ENCODE measurements at regions of chr7 and their contacts with region 1.

Region 1: DNA sequence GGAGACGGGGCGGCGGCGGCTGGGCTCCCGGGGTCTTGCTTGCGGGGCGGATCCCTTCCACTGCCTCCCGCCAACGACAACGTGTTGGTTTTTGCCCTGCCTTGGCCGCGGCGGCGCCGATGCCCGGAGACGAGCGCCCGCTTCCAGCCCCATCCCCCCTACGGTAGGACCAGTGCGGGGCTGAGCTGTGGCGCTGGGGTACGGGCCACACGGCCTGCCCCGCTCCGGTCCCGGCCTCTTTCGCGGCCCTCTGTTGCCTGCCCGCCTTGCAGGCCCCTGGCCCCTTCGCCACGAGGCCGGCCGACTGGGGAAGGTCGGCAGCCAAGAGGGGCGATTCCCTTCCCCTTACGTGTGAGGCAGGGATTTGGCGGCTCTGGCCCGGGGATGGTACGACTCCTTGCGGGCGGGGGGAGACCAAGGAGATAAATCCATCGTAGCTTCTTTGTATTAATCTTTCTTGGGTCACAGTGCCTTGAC is 488 bp downstream of the EIF4H start:
- DNase-seq: peak; percentile 55

Region 2: GRCh38 chr7:73647725-73648592 is 526.7 kb before region 1 on chr7:
- in situ Hi-C with region 1: no loop called
- DNase-seq: peak; percentile 27

Region 3: GRCh38 chr7:74083117-74083876 is 91.3 kb before region 1 on chr7 and contains the start of gene LIMK1:
- in situ Hi-C with region 1: loop called (anchors 25 kb)
- DNase-seq: peak; percentile 78
- total RNA-seq, gene LIMK1: 26.4 and 28.8 TPM in 2 replicates

Region 4: GRCh38 chr7:74312418-74313021 is 137.9 kb after region 1 on chr7:
- in situ Hi-C with region 1: no loop called
- DNase-seq: no peak

Measured in SK-MEL-5 (cell line).